Naive thymus-derived CD4-positive, alpha-beta T cell (primary cell): ENCODE measurements at regions of chr11 and their contacts with region 1.

Region 1: GRCh38 chr11:72585762-72586311 is 88.4 kb downstream of the PDE2A start:
- DNase-seq: peak; percentile 40 to 81 (median 61)
- ATAC-seq: peak; percentile 83
- H3K4me3 ChIP-seq: peak overlapping the region; percentile 72
- H3K4me3 Mint-ChIP-seq: peak overlapping the region; percentile 64 to 94 (median 90)
- H3K27ac ChIP-seq: no peak overlapping the region
- H3K27ac Mint-ChIP-seq: peak overlapping the region in 3 of 9 donors; percentile 20 to 68 (median 57)
- H3K4me1 ChIP-seq: peaks cover 15 to 22% of the 10 kb centered on the region in 2 donors
- H3K4me1 Mint-ChIP-seq: peaks cover 26 to 37% (median 36%) of the 10 kb centered on the region in 7 donors
- H3K27me3 ChIP-seq: peaks cover 0 to 3% of the 10 kb centered on the region in 2 donors
- H3K27me3 Mint-ChIP-seq: peaks cover 20 to 59% (median 35%) of the 10 kb centered on the region in 5 donors

Region 2: DNA sequence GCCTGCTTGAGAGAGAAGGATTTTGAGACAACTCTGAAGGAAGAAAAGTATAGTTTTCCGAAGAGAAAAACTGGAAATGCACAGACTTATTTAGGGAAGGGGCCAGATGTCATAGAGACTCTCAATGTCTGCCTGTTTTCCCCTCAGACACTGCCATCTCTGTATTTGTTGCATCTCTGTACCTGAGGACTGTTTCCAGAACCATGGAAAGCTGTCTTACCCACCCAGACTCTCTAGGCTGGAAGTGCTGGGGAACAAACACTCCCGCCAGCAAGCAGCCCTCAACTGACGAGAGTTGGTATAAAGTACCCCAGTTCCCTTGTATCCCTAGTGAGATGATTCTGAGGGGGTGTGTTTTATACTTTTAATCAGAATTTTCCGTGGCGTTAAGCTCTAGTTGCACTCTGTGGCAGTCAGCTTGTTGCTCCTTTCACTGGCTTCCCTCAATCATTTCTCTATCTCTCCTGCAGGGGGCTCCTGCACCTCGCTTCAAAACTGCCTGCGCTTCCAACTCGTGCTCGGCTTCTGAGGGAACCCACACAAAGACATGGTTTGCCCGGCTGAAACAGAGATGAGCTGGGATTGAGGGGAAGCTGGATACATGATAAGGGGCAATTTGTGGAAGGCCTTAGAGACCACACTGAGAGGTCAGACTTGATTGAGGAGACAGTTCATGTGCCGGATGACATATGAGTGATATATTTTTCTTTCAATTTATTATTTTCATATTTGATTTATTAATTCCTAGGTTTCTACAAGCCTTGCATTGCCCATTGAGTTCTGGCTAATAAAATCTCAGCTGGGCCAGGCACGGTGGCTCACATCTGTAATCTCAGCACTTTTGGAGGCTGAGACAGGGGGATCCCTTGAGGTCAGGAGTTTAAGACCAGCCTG is 114.6 kb before region 1 on chr11:
- CTCF ChIA-PET with region 1: interaction called, 7 read pairs
- POLR2A ChIA-PET with region 1: no interaction called
- intact Hi-C with region 1: loop called in 1 of 2 experiments (anchors 1 kb)
- DNase-seq: peak; percentile 23 to 72 (median 62)
- ATAC-seq: peak; percentile 84
- H3K4me3 ChIP-seq: no peak overlapping the region
- H3K4me3 Mint-ChIP-seq: peak overlapping the region in 6 of 10 donors; percentile 34 to 63 (median 42)
- H3K27ac ChIP-seq: no peak overlapping the region
- H3K27ac Mint-ChIP-seq: peak overlapping the region in 1 of 9 donors; percentile 2
- H3K4me1 ChIP-seq: no peaks in the 10 kb centered on the region
- H3K4me1 Mint-ChIP-seq: peaks cover 0 to 6% (median 4%) of the 10 kb centered on the region in 7 donors
- H3K27me3 ChIP-seq: no peaks in the 10 kb centered on the region
- H3K27me3 Mint-ChIP-seq: peaks cover 23 to 51% (median 34%) of the 10 kb centered on the region in 5 donors

Region 3: GRCh38 chr11:72483412-72484186 is 102.2 kb before region 1 on chr11:
- CTCF ChIA-PET with region 1: interaction called, 3 read pairs
- POLR2A ChIA-PET with region 1: no interaction called
- intact Hi-C with region 1: loop called in 1 of 2 experiments (anchors 1 kb)
- DNase-seq: peak in 1 of 9 donors; percentile 12
- ATAC-seq: peak; percentile 64
- H3K4me3 ChIP-seq: no peak overlapping the region
- H3K4me3 Mint-ChIP-seq: peak overlapping the region in 2 of 10 donors; percentile 23 to 59
- H3K27ac ChIP-seq: no peak overlapping the region
- H3K27ac Mint-ChIP-seq: peak overlapping the region in 3 of 9 donors; percentile 21 to 71 (median 26)
- H3K4me1 ChIP-seq: peaks cover 0 to 4% of the 10 kb centered on the region in 2 donors
- H3K4me1 Mint-ChIP-seq: peaks cover 0 to 14% (median 7%) of the 10 kb centered on the region in 7 donors
- H3K27me3 ChIP-seq: no peaks in the 10 kb centered on the region
- H3K27me3 Mint-ChIP-seq: peaks cover 0 to 12% (median 9%) of the 10 kb centered on the region in 5 donors

Region 4: DNA sequence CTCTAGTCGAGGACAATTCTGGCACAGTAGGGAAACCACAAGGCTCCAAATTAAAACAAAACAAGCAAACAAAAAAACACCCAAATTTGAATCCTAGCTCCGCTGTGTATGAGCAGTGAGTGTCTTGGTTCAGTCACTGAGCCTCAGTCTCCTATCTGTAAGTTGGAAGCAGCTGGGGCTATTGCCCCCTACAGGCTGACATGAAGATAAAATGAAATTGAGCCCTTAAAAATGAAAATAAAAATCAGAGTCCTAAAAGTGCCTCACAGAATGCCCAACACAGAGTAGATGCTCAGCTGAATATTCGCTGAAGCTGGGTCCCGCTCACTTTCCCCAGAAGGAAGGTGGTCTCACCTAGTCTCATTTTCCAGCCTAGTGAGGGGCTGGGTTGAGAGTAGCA is 23.2 kb after region 1 on chr11:
- CTCF ChIA-PET with region 1: interaction called, 3 read pairs
- POLR2A ChIA-PET with region 1: no interaction called
- intact Hi-C with region 1: loop called (anchors 1 to 2 kb)
- DNase-seq: peak in 1 of 9 donors; percentile 28
- ATAC-seq: no peak
- H3K4me3 ChIP-seq: no peak overlapping the region
- H3K4me3 Mint-ChIP-seq: no peak overlapping the region
- H3K27ac ChIP-seq: no peak overlapping the region
- H3K27ac Mint-ChIP-seq: no peak overlapping the region
- H3K4me1 ChIP-seq: no peaks in the 10 kb centered on the region
- H3K4me1 Mint-ChIP-seq: peaks cover 2 to 14% (median 5%) of the 10 kb centered on the region in 7 donors
- H3K27me3 ChIP-seq: no peaks in the 10 kb centered on the region
- H3K27me3 Mint-ChIP-seq: peaks cover 8 to 38% (median 28%) of the 10 kb centered on the region in 5 donors

Region 5: GRCh38 chr11:72642884-72643511 is 57.2 kb after region 1 on chr11:
- CTCF ChIA-PET with region 1: interaction called, 6 read pairs
- POLR2A ChIA-PET with region 1: no interaction called
- intact Hi-C with region 1: loop called (anchors 1 kb)
- DNase-seq: peak; percentile 25 to 81 (median 70)
- ATAC-seq: peak; percentile 82
- H3K4me3 ChIP-seq: peak overlapping the region; percentile 55
- H3K4me3 Mint-ChIP-seq: peak overlapping the region in 8 of 10 donors; percentile 27 to 72 (median 64)
- H3K27ac ChIP-seq: no peak overlapping the region
- H3K27ac Mint-ChIP-seq: peak overlapping the region in 1 of 9 donors; percentile 7
- H3K4me1 ChIP-seq: no peaks in the 10 kb centered on the region
- H3K4me1 Mint-ChIP-seq: peaks cover 0 to 6% (median 0%) of the 10 kb centered on the region in 7 donors
- H3K27me3 ChIP-seq: no peaks in the 10 kb centered on the region
- H3K27me3 Mint-ChIP-seq: peaks cover 0 to 15% (median 0%) of the 10 kb centered on the region in 5 donors

Region 6: DNA sequence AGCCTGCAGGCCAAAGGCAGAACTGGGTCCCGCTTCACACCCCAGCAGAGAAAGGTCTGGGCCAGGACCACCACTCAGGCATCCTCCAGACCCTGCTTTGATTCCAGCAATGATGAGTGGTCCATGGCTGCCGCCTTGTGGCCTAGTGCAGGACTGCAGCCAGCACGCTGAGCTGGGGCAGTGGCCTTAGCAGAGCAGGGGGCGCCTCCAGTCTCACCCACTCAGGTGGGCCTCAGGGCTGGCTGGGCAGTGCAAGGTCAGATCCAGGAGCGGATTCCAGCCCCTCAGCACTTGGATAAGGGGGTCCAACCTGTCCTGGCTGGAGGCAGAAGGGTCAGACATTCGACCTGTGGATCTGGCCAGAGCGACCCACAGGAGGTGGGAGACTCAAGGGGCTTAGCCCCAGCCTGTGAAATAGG is 98.0 kb after region 1 on chr11:
- CTCF ChIA-PET with region 1: interaction called, 8 read pairs
- POLR2A ChIA-PET with region 1: no interaction called
- intact Hi-C with region 1: loop called (anchors 1 kb)
- DNase-seq: peak; percentile 36 to 75 (median 56)
- ATAC-seq: peak; percentile 77
- H3K4me3 ChIP-seq: no peak overlapping the region
- H3K4me3 Mint-ChIP-seq: no peak overlapping the region
- H3K27ac ChIP-seq: no peak overlapping the region
- H3K27ac Mint-ChIP-seq: peak overlapping the region in 3 of 9 donors; percentile 59 to 74 (median 61)
- H3K4me1 ChIP-seq: no peaks in the 10 kb centered on the region
- H3K4me1 Mint-ChIP-seq: peaks cover 7 to 46% (median 16%) of the 10 kb centered on the region in 7 donors
- H3K27me3 ChIP-seq: no peaks in the 10 kb centered on the region
- H3K27me3 Mint-ChIP-seq: peaks cover 0 to 11% (median 0%) of the 10 kb centered on the region in 5 donors

Region 7: DNA sequence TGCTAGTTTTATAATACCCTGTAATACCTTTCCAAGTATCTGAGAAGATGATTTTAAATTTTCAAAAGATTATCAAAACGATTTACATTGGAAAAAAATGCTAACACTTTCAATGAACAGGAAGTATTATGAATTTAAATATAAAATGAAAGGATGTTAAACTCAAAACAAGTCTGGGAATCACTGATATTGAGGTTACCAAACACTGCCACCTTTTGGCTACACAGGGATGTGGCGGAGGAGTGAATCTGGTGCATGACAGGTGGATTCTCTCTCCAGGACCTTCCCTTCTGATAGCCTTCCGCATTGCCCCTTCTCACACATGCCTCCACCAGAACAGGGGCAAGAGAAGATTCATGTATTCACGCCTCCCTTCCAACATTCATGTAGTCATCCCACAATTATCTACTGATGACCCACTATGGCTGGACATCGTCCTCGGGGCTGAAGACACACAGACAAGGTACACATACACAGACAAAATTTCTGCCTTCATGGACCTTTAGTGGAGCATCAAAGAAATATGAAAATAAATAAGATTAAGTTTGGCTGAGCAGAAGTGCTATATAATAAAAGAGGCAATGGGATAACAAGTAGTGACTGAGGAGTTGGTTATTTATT is 263.1 kb after region 1 on chr11:
- CTCF ChIA-PET with region 1: no interaction called
- POLR2A ChIA-PET with region 1: no interaction called
- intact Hi-C with region 1: loop called in 1 of 2 experiments (anchors 1 kb)
- DNase-seq: peak in 7 of 9 donors; percentile 28 to 61 (median 47)
- ATAC-seq: peak; percentile 81
- H3K4me3 ChIP-seq: no peak overlapping the region
- H3K4me3 Mint-ChIP-seq: no peak overlapping the region
- H3K27ac ChIP-seq: no peak overlapping the region
- H3K27ac Mint-ChIP-seq: peak overlapping the region in 3 of 9 donors; percentile 3 to 81 (median 4)
- H3K4me1 ChIP-seq: no peaks in the 10 kb centered on the region
- H3K4me1 Mint-ChIP-seq: peaks cover 4 to 28% (median 12%) of the 10 kb centered on the region in 7 donors
- H3K27me3 ChIP-seq: no peaks in the 10 kb centered on the region
- H3K27me3 Mint-ChIP-seq: no peaks in the 10 kb centered on the region